ENCODE measurements at regions of chr19 and their contacts with region 1.

Region 1: GRCh38 chr19:925526-926322 is at the start of gene ARID3A:
- DNase-seq: peak; percentile 71
- ATAC-seq: peak; percentile 58
- H3K4me3 ChIP-seq: peak within 1 kb of the TSS; percentile 84 to 87
- H3K27ac ChIP-seq: peak within 1 kb of the TSS; percentile 91
- H3K4me1 ChIP-seq: peaks cover 13 to 49% of the 10 kb centered on the region in 2 experiments
- H3K27me3 ChIP-seq: no peaks in the 10 kb centered on the region
- CTCF ChIP-seq: no peak
- POLR2A ChIP-seq: no peak
- RAD21 ChIP-seq: no peak
- total RNA-seq, gene ARID3A: 21.8 TPM

Region 2: DNA sequence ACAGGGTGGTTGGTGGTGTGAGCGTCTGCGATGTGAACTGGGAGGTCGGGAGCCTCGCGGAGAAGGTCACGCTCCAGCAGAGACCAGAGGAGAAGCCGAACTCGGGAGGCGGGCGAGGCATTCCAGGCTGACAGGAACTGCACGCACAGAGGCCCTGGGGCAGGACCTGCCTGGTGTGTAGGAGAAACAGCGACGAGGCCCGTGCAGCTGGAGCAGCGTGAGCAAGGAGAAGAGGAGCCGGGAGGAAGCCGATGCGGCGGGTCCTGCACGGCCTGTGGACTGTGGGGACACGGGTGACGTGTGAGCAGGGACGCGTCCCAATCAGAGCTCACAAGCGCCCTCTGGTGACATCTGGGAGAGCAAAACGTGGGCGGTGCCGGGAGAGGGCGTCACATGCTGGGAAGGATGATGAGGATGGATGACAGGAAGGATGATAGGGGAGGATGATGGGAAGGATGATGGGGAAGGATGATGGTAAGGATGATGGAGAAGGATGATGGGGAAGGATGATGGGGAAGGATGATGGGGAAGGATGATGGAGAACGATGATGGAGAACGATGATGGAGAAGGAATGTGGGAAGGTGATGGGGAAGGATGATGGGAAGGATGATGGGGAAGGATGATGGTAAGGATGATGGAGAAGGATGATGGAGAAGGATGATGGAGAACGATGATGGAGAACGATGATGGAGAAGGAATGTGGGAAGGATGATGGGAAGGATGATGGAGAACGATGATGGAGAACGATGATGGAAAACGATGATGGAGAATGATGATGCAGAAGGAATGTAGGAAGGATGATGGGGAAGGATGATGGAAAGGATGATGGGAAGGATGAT is 445.5 kb before region 1 on chr19:
- CTCF ChIA-PET with region 1: no interaction called
- POLR2A ChIA-PET with region 1: no interaction called
- RAD21 ChIA-PET with region 1: no interaction called
- intact Hi-C with region 1: no loop called
- DNase-seq: no peak
- ATAC-seq: peak; percentile 67
- H3K4me3 ChIP-seq: no peak overlapping the region
- H3K27ac ChIP-seq: no peak overlapping the region; the same call in 1 of the 2 replicates
- H3K4me1 ChIP-seq: no peaks in the 10 kb centered on the region
- H3K27me3 ChIP-seq: no peaks in the 10 kb centered on the region
- CTCF ChIP-seq: peak; percentile 38 to 70 (median 47); a peak in 5 of 6 replicates
- POLR2A ChIP-seq: no peak
- RAD21 ChIP-seq: peak; percentile 63

Region 3: DNA sequence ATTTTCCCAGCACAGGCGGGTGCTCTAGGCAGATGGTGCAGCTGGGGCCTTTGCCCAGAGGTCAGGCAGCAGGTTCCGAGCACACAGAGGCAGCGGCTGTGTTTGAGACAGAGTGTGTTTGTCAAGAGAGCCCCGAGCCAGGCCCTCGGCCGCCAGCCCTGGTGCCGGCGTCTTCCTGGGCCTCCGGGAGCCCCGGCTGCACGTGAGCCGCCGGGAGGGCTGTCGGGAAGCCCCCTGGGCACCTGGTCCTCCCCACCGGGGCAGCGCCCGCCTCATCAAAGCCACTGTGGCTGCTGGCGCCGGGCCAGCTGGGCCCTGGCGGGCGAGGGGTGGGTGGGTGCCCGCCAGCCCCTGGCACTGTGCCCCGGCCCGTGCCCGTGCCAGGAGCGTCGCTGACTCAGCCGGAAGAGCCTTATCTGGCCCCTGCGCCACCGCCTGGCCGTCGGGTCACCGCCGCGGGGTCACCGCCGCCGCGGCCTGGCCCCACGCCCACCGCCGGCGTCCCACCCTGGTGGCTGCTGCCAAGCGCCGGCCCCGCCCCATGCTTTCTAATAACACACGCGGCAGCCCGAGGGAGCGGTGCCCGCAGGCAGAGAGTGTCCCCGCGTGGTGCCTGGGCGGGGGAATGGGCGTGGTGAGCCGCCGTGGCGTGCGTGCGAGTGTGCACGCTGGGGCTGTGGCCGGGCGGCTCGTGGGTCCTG is 15.0 kb after region 1 on chr19:
- CTCF ChIA-PET with region 1: no interaction called
- POLR2A ChIA-PET with region 1: no interaction called
- RAD21 ChIA-PET with region 1: no interaction called
- intact Hi-C with region 1: loop called (anchors 2 kb)
- DNase-seq: no peak
- ATAC-seq: peak; percentile 88
- H3K4me3 ChIP-seq: peak overlapping the region; percentile 31 to 54
- H3K27ac ChIP-seq: peak overlapping the region; percentile 70
- H3K4me1 ChIP-seq: peaks cover 25 to 32% of the 10 kb centered on the region in 2 experiments
- H3K27me3 ChIP-seq: no peaks in the 10 kb centered on the region
- CTCF ChIP-seq: no peak
- POLR2A ChIP-seq: no peak
- RAD21 ChIP-seq: no peak

Region 4: GRCh38 chr19:984165-984967 is 58.6 kb after region 1 on chr19 and contains the start of gene WDR18:
- CTCF ChIA-PET with region 1: interaction called, 21 read pairs
- POLR2A ChIA-PET with region 1: interaction called, 9 read pairs
- RAD21 ChIA-PET with region 1: interaction called, 5 to 8 read pairs
- intact Hi-C with region 1: loop called (anchors 1 kb)
- DNase-seq: peak; percentile 71
- ATAC-seq: peak; percentile 67
- H3K4me3 ChIP-seq: peak within 1 kb of the TSS; percentile 92 to 99
- H3K27ac ChIP-seq: peak within 1 kb of the TSS; percentile 88
- H3K4me1 ChIP-seq: peaks cover 22 to 40% of the 10 kb centered on the region in 2 experiments
- H3K27me3 ChIP-seq: no peaks in the 10 kb centered on the region
- CTCF ChIP-seq: no peak
- POLR2A ChIP-seq: peak; percentile 62
- RAD21 ChIP-seq: no peak
- total RNA-seq, gene WDR18: 124 TPM

Region 5: DNA sequence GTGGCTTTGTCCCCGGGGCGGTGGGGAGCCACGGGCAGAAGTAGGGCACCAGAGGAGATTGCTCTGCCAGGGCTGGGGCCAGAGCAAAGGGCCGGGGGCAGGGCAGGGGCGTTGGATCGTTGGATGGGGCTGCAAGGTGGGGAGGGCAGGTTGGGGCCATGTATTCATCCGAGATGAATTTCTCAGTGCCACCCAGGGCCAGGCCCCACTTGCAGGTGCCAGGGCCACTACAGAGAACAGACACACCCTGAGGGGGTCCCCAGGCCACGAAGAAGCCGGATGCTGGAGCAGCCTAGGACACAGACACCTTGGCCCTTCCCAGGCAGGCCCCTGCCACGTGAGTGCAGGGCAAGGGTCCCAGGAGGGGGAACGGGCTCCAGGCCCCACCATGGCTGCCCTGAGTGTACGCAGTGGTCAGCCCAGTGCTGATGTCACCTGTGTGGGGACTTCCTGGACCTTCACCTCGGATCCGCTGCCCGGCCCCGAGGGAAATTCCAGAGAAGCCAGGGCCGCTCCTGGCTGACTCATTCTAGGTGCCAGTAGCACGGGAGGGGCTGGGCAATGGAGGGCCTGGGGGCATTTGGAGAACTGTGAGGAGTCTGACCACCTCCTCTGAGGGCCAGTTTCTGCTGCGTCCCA is 257.9 kb after region 1 on chr19:
- CTCF ChIA-PET with region 1: no interaction called
- POLR2A ChIA-PET with region 1: interaction called, 7 read pairs
- RAD21 ChIA-PET with region 1: no interaction called
- intact Hi-C with region 1: loop called (anchors 10 kb)
- DNase-seq: peak; percentile 73
- ATAC-seq: peak; percentile 74
- H3K4me3 ChIP-seq: peak overlapping the region; percentile 9 to 28; a peak in 3 of 4 replicates
- H3K27ac ChIP-seq: peak overlapping the region; percentile 89
- H3K4me1 ChIP-seq: peaks cover 68 to 88% of the 10 kb centered on the region in 2 experiments
- H3K27me3 ChIP-seq: no peaks in the 10 kb centered on the region
- CTCF ChIP-seq: no peak
- POLR2A ChIP-seq: no peak
- RAD21 ChIP-seq: no peak; the same call in 1 of the 2 replicates